Prostate gland (tissue), 2 donors: ENCODE measurements at regions of chr17 and their contacts with region 1.

Region 1: GRCh38 chr17:39636927-39637736 is at the start of gene STARD3:
- DNase-seq: peak; percentile 91
- H3K4me3 ChIP-seq: peak within 1 kb of the TSS; percentile 62 to 66
- H3K27ac ChIP-seq: peak within 1 kb of the TSS; percentile 76 to 87
- H3K4me1 ChIP-seq: peaks cover 26% of the 10 kb centered on the region
- H3K27me3 ChIP-seq: no peaks in the 10 kb centered on the region
- CTCF ChIP-seq: peak in 3 of 4 experiments; percentile 14 to 44 (median 35)
- POLR2A ChIP-seq: peak; percentile 64
- total RNA-seq, gene STARD3: 52.5 to 202 TPM

Region 2: DNA sequence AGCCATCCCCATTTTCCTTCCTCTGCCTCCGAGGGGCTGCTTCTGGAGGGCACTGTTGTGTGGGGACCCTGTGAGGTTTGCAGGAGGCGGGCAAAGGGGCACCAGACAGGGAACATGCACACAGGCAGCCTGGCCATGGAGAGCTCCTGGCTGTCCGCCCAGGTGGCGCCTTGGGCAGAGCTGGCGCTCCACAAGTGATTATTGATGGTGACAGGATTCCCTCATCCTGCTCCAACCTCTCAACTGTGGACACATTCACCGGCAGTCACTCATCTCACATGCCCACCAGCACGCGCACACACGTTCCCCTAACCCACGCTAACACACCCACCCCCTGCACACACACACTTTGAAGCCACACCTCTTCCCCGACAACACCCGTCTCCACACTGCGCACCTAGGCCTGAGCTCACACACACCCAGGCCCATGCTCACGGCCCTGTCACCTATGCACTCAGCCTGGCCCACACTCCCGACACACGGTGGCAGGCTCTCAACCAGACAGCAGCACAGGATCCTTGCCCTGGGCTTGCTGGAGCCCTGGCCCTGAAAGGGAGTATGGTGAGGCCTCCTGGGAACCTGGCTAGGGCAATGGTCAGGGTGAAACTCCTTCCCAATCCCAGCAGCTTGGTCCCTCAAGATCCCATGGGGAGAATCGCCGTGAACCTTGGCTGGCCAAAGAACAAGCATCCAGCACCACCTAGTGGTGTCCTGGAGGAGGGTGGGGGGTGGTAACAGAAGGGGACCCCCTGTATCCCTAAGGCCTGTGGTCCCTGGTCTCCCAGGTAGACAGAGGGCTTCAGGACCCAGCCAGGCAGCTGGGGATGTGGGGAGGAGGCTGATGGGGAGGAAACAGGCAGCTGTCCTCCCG is 34.8 kb after region 1 on chr17:
- intact Hi-C with region 1: loop called (anchors 5 kb)
- DNase-seq: peak; percentile 39
- H3K4me3 ChIP-seq: no peak overlapping the region
- H3K27ac ChIP-seq: no peak overlapping the region
- H3K4me1 ChIP-seq: peaks cover 23% of the 10 kb centered on the region
- H3K27me3 ChIP-seq: no peaks in the 10 kb centered on the region
- CTCF ChIP-seq: peak in 3 of 4 experiments; percentile 41 to 71 (median 69)
- POLR2A ChIP-seq: peak; percentile 15

Region 3: GRCh38 chr17:39845052-39845846 is 208.1 kb after region 1 on chr17:
- intact Hi-C with region 1: no loop called
- DNase-seq: no peak
- H3K4me3 ChIP-seq: no peak overlapping the region
- H3K27ac ChIP-seq: no peak overlapping the region
- H3K4me1 ChIP-seq: no peaks in the 10 kb centered on the region
- H3K27me3 ChIP-seq: no peaks in the 10 kb centered on the region
- CTCF ChIP-seq: no peak
- POLR2A ChIP-seq: no peak

Region 4: GRCh38 chr17:40518401-40519121 is 881.4 kb after region 1 on chr17:
- intact Hi-C with region 1: no loop called
- DNase-seq: no peak
- H3K4me3 ChIP-seq: no peak overlapping the region
- H3K27ac ChIP-seq: no peak overlapping the region
- H3K4me1 ChIP-seq: no peaks in the 10 kb centered on the region
- H3K27me3 ChIP-seq: no peaks in the 10 kb centered on the region
- CTCF ChIP-seq: no peak
- POLR2A ChIP-seq: no peak